CD4-positive, alpha-beta memory T cell (primary cell): ENCODE measurements at regions of chr7 and their contacts with region 1.

Region 1: GRCh38 chr7:128343554-128344430 is at the start of gene RBM28:
- DNase-seq: peak; percentile 88 to 93 (median 90)
- H3K4me3 ChIP-seq: peak within 1 kb of the TSS; percentile 82 to 83
- H3K4me3 Mint-ChIP-seq: peak within 1 kb of the TSS; percentile 95 to 98 (median 96)
- H3K27ac ChIP-seq: peak within 1 kb of the TSS; percentile 69
- H3K27ac Mint-ChIP-seq: peak within 1 kb of the TSS; percentile 92 to 97 (median 96)
- H3K4me1 ChIP-seq: peaks cover 27% of the 10 kb centered on the region
- H3K4me1 Mint-ChIP-seq: peaks cover 20 to 40% (median 29%) of the 10 kb centered on the region in 4 donors
- H3K27me3 ChIP-seq: no peaks in the 10 kb centered on the region
- H3K27me3 Mint-ChIP-seq: peaks cover 2 to 3% of the 10 kb centered on the region in 2 donors
- total RNA-seq, gene RBM28: 43.4 to 48.3 TPM

Region 2: GRCh38 chr7:127651556-127652332 is 692.0 kb before region 1 on chr7 and contains the start of gene SND1:
- CTCF ChIA-PET with region 1: no interaction called
- POLR2A ChIA-PET with region 1: no interaction called
- intact Hi-C with region 1: loop called (anchors 5 kb)
- DNase-seq: peak; percentile 98 to 100 (median 100)
- H3K4me3 ChIP-seq: peak within 1 kb of the TSS; percentile 89 to 95
- H3K4me3 Mint-ChIP-seq: peak within 1 kb of the TSS; percentile 94 to 99 (median 98)
- H3K27ac ChIP-seq: peak within 1 kb of the TSS; percentile 93
- H3K27ac Mint-ChIP-seq: peak within 1 kb of the TSS in 5 of 7 donors; percentile 99 to 100 (median 100)
- H3K4me1 ChIP-seq: peaks cover 51% of the 10 kb centered on the region
- H3K4me1 Mint-ChIP-seq: peaks cover 32 to 58% (median 47%) of the 10 kb centered on the region in 4 donors
- H3K27me3 ChIP-seq: no peaks in the 10 kb centered on the region
- H3K27me3 Mint-ChIP-seq: no peaks in the 10 kb centered on the region
- total RNA-seq, gene SND1: 206 to 223 TPM

Region 3: DNA sequence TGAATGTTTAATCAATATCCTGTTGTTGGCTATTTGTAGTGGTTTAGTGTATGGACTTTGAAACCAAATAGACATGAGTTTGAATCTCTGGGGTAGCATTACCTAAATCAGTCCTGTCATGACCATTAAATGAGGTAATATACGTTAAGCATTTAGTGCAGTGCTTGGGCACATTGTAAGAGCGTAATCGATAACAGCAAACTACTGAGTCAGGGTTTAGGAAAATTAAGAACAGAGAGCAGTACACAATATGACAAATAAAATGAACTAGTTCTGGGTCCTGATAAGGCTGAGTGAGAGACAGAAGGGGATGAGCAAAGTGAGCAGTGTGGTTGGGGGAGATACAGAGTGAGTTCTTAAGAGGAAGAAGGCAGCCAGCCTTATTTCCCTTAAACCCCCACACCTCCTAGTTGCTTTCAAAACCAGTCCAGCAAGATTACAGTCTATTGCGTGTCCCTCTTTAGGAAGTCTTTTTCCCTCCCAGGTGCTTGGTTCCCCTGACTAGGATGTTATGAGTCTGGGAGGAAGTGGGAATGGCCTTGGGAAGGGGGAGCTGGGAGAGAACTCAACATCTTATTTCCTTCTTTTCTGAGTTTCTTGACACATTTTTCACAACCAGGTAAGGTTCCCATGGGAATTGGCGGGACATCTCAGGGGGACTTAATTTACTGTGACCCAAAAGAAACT is 520.8 kb before region 1 on chr7:
- CTCF ChIA-PET with region 1: no interaction called
- POLR2A ChIA-PET with region 1: no interaction called
- intact Hi-C with region 1: no loop called
- DNase-seq: no peak
- H3K4me3 ChIP-seq: no peak overlapping the region
- H3K4me3 Mint-ChIP-seq: no peak overlapping the region
- H3K27ac ChIP-seq: no peak overlapping the region
- H3K27ac Mint-ChIP-seq: no peak overlapping the region
- H3K4me1 ChIP-seq: peaks cover 21% of the 10 kb centered on the region
- H3K4me1 Mint-ChIP-seq: peaks cover 32 to 44% (median 37%) of the 10 kb centered on the region in 4 donors
- H3K27me3 ChIP-seq: no peaks in the 10 kb centered on the region
- H3K27me3 Mint-ChIP-seq: no peaks in the 10 kb centered on the region

Region 4: GRCh38 chr7:128322040-128322643 is 21.6 kb before region 1 on chr7:
- CTCF ChIA-PET with region 1: interaction called, 12 read pairs
- POLR2A ChIA-PET with region 1: interaction called, 3 read pairs
- intact Hi-C with region 1: no loop called
- DNase-seq: peak in 2 of 5 donors; percentile 10 to 20
- H3K4me3 ChIP-seq: no peak overlapping the region
- H3K4me3 Mint-ChIP-seq: peak overlapping the region in 3 of 8 donors; percentile 2 to 17 (median 8)
- H3K27ac ChIP-seq: no peak overlapping the region
- H3K27ac Mint-ChIP-seq: peak overlapping the region in 6 of 7 donors; percentile 0 to 65 (median 26)
- H3K4me1 ChIP-seq: peaks cover 17% of the 10 kb centered on the region
- H3K4me1 Mint-ChIP-seq: peaks cover 13 to 34% (median 23%) of the 10 kb centered on the region in 4 donors
- H3K27me3 ChIP-seq: no peaks in the 10 kb centered on the region
- H3K27me3 Mint-ChIP-seq: no peaks in the 10 kb centered on the region

Region 5: DNA sequence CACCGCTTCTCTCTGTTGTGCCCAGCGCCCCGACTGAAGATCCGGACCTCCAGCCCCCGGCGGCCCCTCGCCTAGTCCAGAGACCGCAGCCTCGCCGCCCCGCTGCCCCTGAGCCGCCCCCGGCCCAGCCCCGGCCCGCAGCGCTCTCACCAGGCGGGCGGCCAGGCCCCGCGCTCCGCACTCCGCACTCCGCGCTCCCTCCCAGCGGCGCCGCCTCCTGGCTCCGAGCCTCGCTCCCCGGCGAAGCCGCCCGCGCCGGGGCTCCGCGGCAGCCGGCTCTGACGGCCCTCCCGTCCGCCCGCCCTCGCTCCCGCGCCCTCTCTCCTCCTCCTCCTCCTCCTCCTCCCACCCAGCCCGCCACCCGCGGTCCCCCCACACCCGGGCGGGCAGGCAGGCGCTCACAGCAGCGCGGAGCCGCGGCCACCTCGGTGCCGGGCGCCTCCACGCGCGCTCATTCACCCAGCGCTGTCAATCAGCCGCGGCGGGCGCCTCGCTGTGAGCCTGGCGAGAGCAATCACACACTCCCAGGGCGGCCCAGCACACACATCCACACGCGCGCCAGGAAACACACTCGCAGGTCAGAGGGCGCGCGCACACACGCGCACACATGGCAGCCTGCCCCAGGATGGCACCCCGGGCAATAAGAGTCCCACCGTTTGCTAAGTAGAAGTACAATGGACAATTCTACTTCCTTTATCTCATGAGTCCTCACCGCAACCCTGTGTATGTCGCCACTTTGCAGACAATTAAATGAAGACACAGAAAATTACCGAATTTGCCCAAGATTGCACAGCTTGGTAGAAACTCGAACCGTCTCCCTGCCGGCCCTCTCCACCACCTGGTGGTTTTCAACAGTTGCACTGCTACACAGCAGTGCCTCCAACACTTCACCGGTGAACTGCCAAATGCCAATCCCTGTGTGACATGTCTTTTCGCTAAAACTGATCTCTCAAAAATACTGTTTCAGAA is 17.9 kb after region 1 on chr7 and contains the start of gene PRRT4:
- CTCF ChIA-PET with region 1: interaction called, 6 read pairs
- POLR2A ChIA-PET with region 1: interaction called, 4 read pairs
- intact Hi-C with region 1: loop called (anchors 2 kb)
- DNase-seq: peak; percentile 56 to 70 (median 65)
- H3K4me3 ChIP-seq: peak within 1 kb of the TSS; percentile 19 to 50
- H3K4me3 Mint-ChIP-seq: peak within 1 kb of the TSS; percentile 78 to 93 (median 88)
- H3K27ac ChIP-seq: no peak within 1 kb of the TSS
- H3K27ac Mint-ChIP-seq: peak within 1 kb of the TSS in 6 of 7 donors; percentile 35 to 81 (median 56)
- H3K4me1 ChIP-seq: peaks cover 14% of the 10 kb centered on the region
- H3K4me1 Mint-ChIP-seq: peaks cover 9 to 21% (median 15%) of the 10 kb centered on the region in 4 donors
- H3K27me3 ChIP-seq: peaks cover 13% of the 10 kb centered on the region
- H3K27me3 Mint-ChIP-seq: peaks cover 24 to 31% of the 10 kb centered on the region in 2 donors
- total RNA-seq, gene PRRT4: 0.52 to 0.58 TPM

Region 6: GRCh38 chr7:128387216-128388144 is 43.7 kb after region 1 on chr7:
- CTCF ChIA-PET with region 1: interaction called, 186 read pairs
- POLR2A ChIA-PET with region 1: interaction called, 16 read pairs
- intact Hi-C with region 1: loop called (anchors 1 kb)
- DNase-seq: peak in 4 of 5 donors; percentile 48 to 56 (median 51)
- H3K4me3 ChIP-seq: no peak overlapping the region
- H3K4me3 Mint-ChIP-seq: no peak overlapping the region
- H3K27ac ChIP-seq: no peak overlapping the region
- H3K27ac Mint-ChIP-seq: no peak overlapping the region
- H3K4me1 ChIP-seq: no peaks in the 10 kb centered on the region
- H3K4me1 Mint-ChIP-seq: peaks cover 0 to 4% (median under 1%) of the 10 kb centered on the region in 4 donors
- H3K27me3 ChIP-seq: no peaks in the 10 kb centered on the region
- H3K27me3 Mint-ChIP-seq: no peaks in the 10 kb centered on the region

Region 7: DNA sequence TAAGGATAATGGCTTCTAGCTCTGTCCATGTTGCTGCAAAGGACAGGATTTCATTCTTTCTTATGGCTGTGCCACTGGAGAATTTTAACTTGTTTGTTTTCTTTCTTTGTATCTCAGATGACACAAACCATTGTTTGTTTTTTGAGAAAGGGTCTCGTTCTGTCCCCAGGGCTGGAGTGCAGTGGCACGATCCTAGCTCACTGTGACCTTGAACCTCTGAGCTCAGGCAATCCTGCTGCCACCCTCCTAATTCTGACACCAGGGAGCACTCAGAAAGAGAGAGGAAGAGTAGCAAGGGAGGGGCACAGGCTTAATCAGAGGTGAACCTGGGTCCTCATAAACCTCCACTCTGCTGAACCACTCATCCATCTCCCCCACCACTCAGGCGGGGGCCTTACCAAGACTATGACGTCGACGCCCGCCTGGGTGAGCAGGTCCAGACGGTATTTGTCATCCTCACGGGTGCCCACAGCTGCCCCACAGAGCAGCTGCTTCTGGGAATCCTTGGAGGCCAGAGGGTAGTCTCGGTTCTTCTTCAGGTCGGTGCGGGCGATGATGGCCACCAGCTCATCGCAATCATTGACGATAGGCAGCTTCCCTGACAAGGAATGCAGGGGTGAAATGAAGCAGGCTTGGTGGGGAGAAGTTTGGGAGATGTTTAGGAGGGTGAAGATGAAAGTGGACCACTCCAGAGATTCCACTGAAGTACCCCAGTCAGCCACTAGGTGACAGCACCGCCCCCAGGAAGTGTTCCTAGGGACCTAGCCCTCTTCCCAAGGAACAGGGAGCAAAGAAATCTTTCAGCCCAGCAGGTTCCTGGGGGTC is 54.4 kb after region 1 on chr7:
- CTCF ChIA-PET with region 1: interaction called, 186 read pairs
- POLR2A ChIA-PET with region 1: interaction called, 5 read pairs
- intact Hi-C with region 1: no loop called
- DNase-seq: peak in 2 of 5 donors; percentile 14 to 32
- H3K4me3 ChIP-seq: no peak overlapping the region
- H3K4me3 Mint-ChIP-seq: no peak overlapping the region
- H3K27ac ChIP-seq: no peak overlapping the region
- H3K27ac Mint-ChIP-seq: no peak overlapping the region
- H3K4me1 ChIP-seq: no peaks in the 10 kb centered on the region
- H3K4me1 Mint-ChIP-seq: peaks cover 3 to 10% (median 5%) of the 10 kb centered on the region in 4 donors
- H3K27me3 ChIP-seq: no peaks in the 10 kb centered on the region
- H3K27me3 Mint-ChIP-seq: no peaks in the 10 kb centered on the region

Region 8: DNA sequence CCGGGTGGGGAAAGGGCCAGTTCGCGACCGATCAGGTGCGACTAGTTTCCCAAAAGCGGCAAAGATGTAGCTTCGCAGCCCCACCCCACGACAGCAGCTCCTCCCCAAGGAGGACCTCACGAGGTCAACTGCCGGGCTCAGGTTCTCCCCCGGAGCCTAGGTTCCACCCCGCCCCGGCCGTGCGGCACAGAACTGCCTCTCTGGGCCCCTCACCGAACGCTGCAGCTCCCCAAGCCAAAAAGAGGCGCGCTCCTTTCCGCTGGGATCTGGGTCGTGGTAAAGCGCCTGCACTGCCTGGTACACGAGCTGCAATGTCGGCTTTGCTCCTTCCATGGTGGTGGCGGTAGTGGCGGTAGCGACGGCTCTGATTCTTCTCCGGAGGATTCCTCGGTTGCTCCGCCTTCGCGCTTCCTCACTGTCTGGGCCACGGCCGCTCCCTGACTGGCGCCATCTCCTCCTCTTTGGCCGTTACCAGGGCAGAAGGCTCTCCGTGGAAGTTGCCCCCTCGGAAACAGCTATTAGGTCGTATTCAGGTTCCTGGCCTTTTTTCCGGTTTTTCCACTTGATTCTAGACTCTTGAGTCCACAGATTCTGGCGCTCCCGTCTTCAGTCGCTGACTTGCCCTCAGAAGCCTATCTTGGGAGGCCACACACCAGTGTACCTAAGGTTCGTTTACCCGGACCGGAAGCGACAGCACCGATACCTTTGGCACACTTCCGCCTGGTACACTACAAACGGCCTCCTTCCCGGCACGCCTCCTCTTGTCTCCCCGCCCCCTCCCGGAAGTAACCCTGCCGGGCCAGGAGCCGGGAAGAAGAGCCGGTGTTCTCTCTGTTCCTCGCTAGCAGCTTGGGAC is 710.9 kb after region 1 on chr7 and contains the start of gene TNPO3:
- CTCF ChIA-PET with region 1: interaction called, 3 read pairs
- POLR2A ChIA-PET with region 1: no interaction called
- intact Hi-C with region 1: loop called (anchors 1 kb)
- DNase-seq: peak; percentile 87 to 91 (median 88)
- H3K4me3 ChIP-seq: peak within 1 kb of the TSS; percentile 80 to 91
- H3K4me3 Mint-ChIP-seq: peak within 1 kb of the TSS; percentile 94 to 100 (median 98)
- H3K27ac ChIP-seq: peak within 1 kb of the TSS; percentile 82
- H3K27ac Mint-ChIP-seq: peak within 1 kb of the TSS; percentile 98 to 100 (median 99)
- H3K4me1 ChIP-seq: peaks cover 31% of the 10 kb centered on the region
- H3K4me1 Mint-ChIP-seq: peaks cover 20 to 51% (median 38%) of the 10 kb centered on the region in 4 donors
- H3K27me3 ChIP-seq: no peaks in the 10 kb centered on the region
- H3K27me3 Mint-ChIP-seq: peaks cover 3 to 7% of the 10 kb centered on the region in 2 donors
- total RNA-seq, gene TNPO3: 41.7 to 44.5 TPM